AG04450 (cell line): ENCODE measurements at regions of chr4 and their contacts with region 1.

Region 1: GRCh38 chr4:40897557-40898203 is 147.9 kb downstream of the NSUN7 start:
- DNase-seq: no peak
- H3K4me3 ChIP-seq: no peak overlapping the region
- H3K27ac ChIP-seq: no peak overlapping the region
- H3K27me3 ChIP-seq: no peaks in the 10 kb centered on the region
- CTCF ChIP-seq: peak; percentile 76

Region 2: GRCh38 chr4:40223343-40223742 is 674.3 kb before region 1 on chr4:
- CTCF ChIA-PET with region 1: interaction called, 12 read pairs
- POLR2A ChIA-PET with region 1: no interaction called
- DNase-seq: no peak
- H3K4me3 ChIP-seq: no peak overlapping the region
- H3K27ac ChIP-seq: no peak overlapping the region
- H3K27me3 ChIP-seq: peaks cover 5% of the 10 kb centered on the region
- CTCF ChIP-seq: no peak

Region 3: GRCh38 chr4:40840985-40841571 is 56.6 kb before region 1 on chr4:
- CTCF ChIA-PET with region 1: interaction called, 46 read pairs
- POLR2A ChIA-PET with region 1: interaction called, 3 read pairs
- DNase-seq: peak; percentile 68
- H3K4me3 ChIP-seq: no peak overlapping the region
- H3K27ac ChIP-seq: no peak overlapping the region
- H3K27me3 ChIP-seq: no peaks in the 10 kb centered on the region
- CTCF ChIP-seq: peak; percentile 79

Region 4: GRCh38 chr4:40887288-40888131 is 10.2 kb before region 1 on chr4:
- CTCF ChIA-PET with region 1: interaction called, 45 read pairs
- POLR2A ChIA-PET with region 1: no interaction called
- DNase-seq: peak; percentile 61
- H3K4me3 ChIP-seq: no peak overlapping the region
- H3K27ac ChIP-seq: peak overlapping the region; percentile 72
- H3K27me3 ChIP-seq: no peaks in the 10 kb centered on the region
- CTCF ChIP-seq: no peak

Region 5: GRCh38 chr4:40980318-40980883 is 82.7 kb after region 1 on chr4:
- CTCF ChIA-PET with region 1: no interaction called
- POLR2A ChIA-PET with region 1: no interaction called
- DNase-seq: no peak
- H3K4me3 ChIP-seq: no peak overlapping the region
- H3K27ac ChIP-seq: no peak overlapping the region
- H3K27me3 ChIP-seq: no peaks in the 10 kb centered on the region
- CTCF ChIP-seq: 0 out of 2 replicates have a peak, but pooled peaks have one; percentile 12

Region 6: GRCh38 chr4:41145571-41146078 is 247.9 kb after region 1 on chr4:
- CTCF ChIA-PET with region 1: interaction called, 11 read pairs
- POLR2A ChIA-PET with region 1: no interaction called
- DNase-seq: no peak
- H3K4me3 ChIP-seq: no peak overlapping the region
- H3K27ac ChIP-seq: no peak overlapping the region
- H3K27me3 ChIP-seq: no peaks in the 10 kb centered on the region
- CTCF ChIP-seq: no peak